B cell (primary cell): ENCODE measurements at regions of chr2 and their contacts with region 1.

Region 1: GRCh38 chr2:237691908-237692600 is 64.7 kb downstream of the LRRFIP1 start:
- DNase-seq: peak; percentile 94
- ATAC-seq: peak; percentile 66
- H3K4me3 ChIP-seq: peak overlapping the region; percentile 87 to 94 (median 92)
- H3K4me3 Mint-ChIP-seq: peak overlapping the region; percentile 91
- H3K27ac ChIP-seq: peak overlapping the region; percentile 94 to 95
- H3K27ac Mint-ChIP-seq: peak overlapping the region; percentile 87
- H3K4me1 ChIP-seq: peaks cover 70 to 79% of the 10 kb centered on the region in 2 donors
- H3K4me1 Mint-ChIP-seq: peaks cover 78% of the 10 kb centered on the region
- H3K27me3 ChIP-seq: no peaks in the 10 kb centered on the region
- H3K27me3 Mint-ChIP-seq: no peaks in the 10 kb centered on the region
- CTCF ChIP-seq: no peak

Region 2: GRCh38 chr2:237603718-237604362 is 88.2 kb before region 1 on chr2:
- CTCF ChIA-PET with region 1: no interaction called
- POLR2A ChIA-PET with region 1: interaction called, 9 read pairs
- intact Hi-C with region 1: loop called (anchors 5 kb)
- DNase-seq: peak; percentile 87
- ATAC-seq: peak; percentile 96
- H3K4me3 ChIP-seq: peak overlapping the region in 4 of 5 experiments; percentile 20 to 41 (median 39)
- H3K4me3 Mint-ChIP-seq: peak overlapping the region; percentile 81
- H3K27ac ChIP-seq: peak overlapping the region; percentile 75 to 90
- H3K27ac Mint-ChIP-seq: peak overlapping the region; percentile 90
- H3K4me1 ChIP-seq: peaks cover 19 to 21% of the 10 kb centered on the region in 2 donors
- H3K4me1 Mint-ChIP-seq: peaks cover 26% of the 10 kb centered on the region
- H3K27me3 ChIP-seq: no peaks in the 10 kb centered on the region
- H3K27me3 Mint-ChIP-seq: no peaks in the 10 kb centered on the region
- CTCF ChIP-seq: no peak

Region 3: GRCh38 chr2:237627441-237628246 is 64.4 kb before region 1 on chr2 and contains the start of gene LRRFIP1:
- CTCF ChIA-PET with region 1: interaction called, 8 read pairs
- POLR2A ChIA-PET with region 1: interaction called, 3 read pairs
- intact Hi-C with region 1: loop called (anchors 5 kb)
- DNase-seq: peak; percentile 45
- ATAC-seq: peak; percentile 74
- H3K4me3 ChIP-seq: peak within 1 kb of the TSS; percentile 22 to 59 (median 44)
- H3K4me3 Mint-ChIP-seq: peak within 1 kb of the TSS; percentile 88
- H3K27ac ChIP-seq: no peak within 1 kb of the TSS
- H3K27ac Mint-ChIP-seq: peak within 1 kb of the TSS; percentile 32
- H3K4me1 ChIP-seq: peaks cover 10 to 18% of the 10 kb centered on the region in 2 donors
- H3K4me1 Mint-ChIP-seq: peaks cover 24% of the 10 kb centered on the region
- H3K27me3 ChIP-seq: peaks cover 0 to 16% (median 11%) of the 10 kb centered on the region in 4 experiments
- H3K27me3 Mint-ChIP-seq: peaks cover 30% of the 10 kb centered on the region
- CTCF ChIP-seq: peak; percentile 18
- total RNA-seq, gene LRRFIP1: 139 and 141 TPM in 2 replicates

Region 4: DNA sequence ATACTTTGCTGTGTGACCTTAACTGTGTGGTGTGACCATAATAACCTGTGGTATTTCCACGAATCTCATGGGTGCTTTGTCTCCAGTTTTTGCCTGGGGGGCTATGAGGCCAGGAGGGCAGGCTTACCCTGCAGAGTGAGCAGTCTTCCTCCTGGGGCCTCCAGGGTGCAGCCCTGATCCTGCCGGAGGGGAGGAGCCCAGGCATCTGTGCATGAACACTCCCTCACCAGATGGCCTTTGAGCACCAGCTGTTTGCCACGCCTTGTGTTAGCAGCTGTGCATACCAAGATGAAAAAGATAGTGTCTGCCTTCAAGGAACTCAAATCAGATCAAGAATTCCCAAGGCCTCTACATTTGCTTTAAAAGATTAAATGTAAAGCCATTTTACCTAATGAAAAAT is 31.5 kb after region 1 on chr2:
- CTCF ChIA-PET with region 1: no interaction called
- POLR2A ChIA-PET with region 1: no interaction called
- intact Hi-C with region 1: no loop called
- DNase-seq: peak; percentile 46
- ATAC-seq: peak; percentile 69
- H3K4me3 ChIP-seq: no peak overlapping the region
- H3K4me3 Mint-ChIP-seq: no peak overlapping the region
- H3K27ac ChIP-seq: peak overlapping the region in 1 of 2 donors; percentile 8
- H3K27ac Mint-ChIP-seq: peak overlapping the region; percentile 63
- H3K4me1 ChIP-seq: peaks cover 7 to 14% of the 10 kb centered on the region in 2 donors
- H3K4me1 Mint-ChIP-seq: peaks cover 33% of the 10 kb centered on the region
- H3K27me3 ChIP-seq: no peaks in the 10 kb centered on the region
- H3K27me3 Mint-ChIP-seq: no peaks in the 10 kb centered on the region
- CTCF ChIP-seq: no peak

Region 5: GRCh38 chr2:237782181-237782580 is 90.1 kb after region 1 on chr2:
- CTCF ChIA-PET with region 1: no interaction called
- POLR2A ChIA-PET with region 1: no interaction called
- intact Hi-C with region 1: no loop called
- DNase-seq: no peak
- ATAC-seq: no peak
- H3K4me3 ChIP-seq: no peak overlapping the region
- H3K4me3 Mint-ChIP-seq: no peak overlapping the region
- H3K27ac ChIP-seq: no peak overlapping the region
- H3K27ac Mint-ChIP-seq: no peak overlapping the region
- H3K4me1 ChIP-seq: no peaks in the 10 kb centered on the region
- H3K4me1 Mint-ChIP-seq: no peaks in the 10 kb centered on the region
- H3K27me3 ChIP-seq: no peaks in the 10 kb centered on the region
- H3K27me3 Mint-ChIP-seq: no peaks in the 10 kb centered on the region
- CTCF ChIP-seq: no peak